CD8-positive, alpha-beta T cell (primary cell): ENCODE measurements at regions of chr15 and their contacts with region 1.

Region 1: GRCh38 chr15:38563723-38564519 is 693 bp downstream of the RASGRP1 start:
- DNase-seq: peak; percentile 79 to 94 (median 89)
- ATAC-seq: peak; percentile 61
- H3K4me3 ChIP-seq: peak overlapping the region; percentile 90 to 96
- H3K4me3 Mint-ChIP-seq: peak overlapping the region; percentile 98
- H3K27ac ChIP-seq: peak overlapping the region; percentile 78 to 79
- H3K27ac Mint-ChIP-seq: peak overlapping the region; percentile 95
- H3K4me1 ChIP-seq: peaks cover 56% of the 10 kb centered on the region
- H3K4me1 Mint-ChIP-seq: peaks cover 66% of the 10 kb centered on the region
- H3K27me3 ChIP-seq: no peaks in the 10 kb centered on the region
- H3K27me3 Mint-ChIP-seq: no peaks in the 10 kb centered on the region
- CTCF ChIP-seq: peak; percentile 98

Region 2: GRCh38 chr15:38474155-38474757 is 89.7 kb before region 1 on chr15:
- CTCF ChIA-PET with region 1: interaction called, 10 read pairs
- POLR2A ChIA-PET with region 1: no interaction called
- intact Hi-C with region 1: loop called (anchors 2 to 5 kb)
- DNase-seq: peak in 7 of 9 experiments; percentile 13 to 85 (median 32)
- ATAC-seq: peak; percentile 99
- H3K4me3 ChIP-seq: no peak overlapping the region
- H3K4me3 Mint-ChIP-seq: no peak overlapping the region
- H3K27ac ChIP-seq: peak overlapping the region in 1 of 2 experiments; percentile 17
- H3K27ac Mint-ChIP-seq: peak overlapping the region; percentile 37
- H3K4me1 ChIP-seq: no peaks in the 10 kb centered on the region
- H3K4me1 Mint-ChIP-seq: peaks cover 9% of the 10 kb centered on the region
- H3K27me3 ChIP-seq: no peaks in the 10 kb centered on the region
- H3K27me3 Mint-ChIP-seq: no peaks in the 10 kb centered on the region
- CTCF ChIP-seq: peak; percentile 74

Region 3: GRCh38 chr15:38521316-38521715 is 42.6 kb before region 1 on chr15:
- CTCF ChIA-PET with region 1: interaction called, 17 read pairs
- POLR2A ChIA-PET with region 1: no interaction called
- intact Hi-C with region 1: loop called in 1 of 2 experiments (anchors 5 kb)
- DNase-seq: no peak
- ATAC-seq: no peak
- H3K4me3 ChIP-seq: no peak overlapping the region
- H3K4me3 Mint-ChIP-seq: no peak overlapping the region
- H3K27ac ChIP-seq: no peak overlapping the region
- H3K27ac Mint-ChIP-seq: peak overlapping the region; percentile 83
- H3K4me1 ChIP-seq: peaks cover 5% of the 10 kb centered on the region
- H3K4me1 Mint-ChIP-seq: peaks cover 56% of the 10 kb centered on the region
- H3K27me3 ChIP-seq: no peaks in the 10 kb centered on the region
- H3K27me3 Mint-ChIP-seq: no peaks in the 10 kb centered on the region
- CTCF ChIP-seq: no peak

Region 4: GRCh38 chr15:38576837-38577236 is 12.9 kb after region 1 on chr15:
- CTCF ChIA-PET with region 1: interaction called, 13 read pairs
- POLR2A ChIA-PET with region 1: interaction called, 4 read pairs
- intact Hi-C with region 1: loop called in 1 of 2 experiments (anchors 2 kb)
- DNase-seq: peak in 2 of 9 experiments; percentile 62 to 82
- ATAC-seq: peak; percentile 72
- H3K4me3 ChIP-seq: no peak overlapping the region
- H3K4me3 Mint-ChIP-seq: peak overlapping the region; percentile 42
- H3K27ac ChIP-seq: peak overlapping the region; percentile 34 to 76
- H3K27ac Mint-ChIP-seq: peak overlapping the region; percentile 84
- H3K4me1 ChIP-seq: peaks cover 35% of the 10 kb centered on the region
- H3K4me1 Mint-ChIP-seq: peaks cover 39% of the 10 kb centered on the region
- H3K27me3 ChIP-seq: no peaks in the 10 kb centered on the region
- H3K27me3 Mint-ChIP-seq: no peaks in the 10 kb centered on the region
- CTCF ChIP-seq: no peak

Region 5: DNA sequence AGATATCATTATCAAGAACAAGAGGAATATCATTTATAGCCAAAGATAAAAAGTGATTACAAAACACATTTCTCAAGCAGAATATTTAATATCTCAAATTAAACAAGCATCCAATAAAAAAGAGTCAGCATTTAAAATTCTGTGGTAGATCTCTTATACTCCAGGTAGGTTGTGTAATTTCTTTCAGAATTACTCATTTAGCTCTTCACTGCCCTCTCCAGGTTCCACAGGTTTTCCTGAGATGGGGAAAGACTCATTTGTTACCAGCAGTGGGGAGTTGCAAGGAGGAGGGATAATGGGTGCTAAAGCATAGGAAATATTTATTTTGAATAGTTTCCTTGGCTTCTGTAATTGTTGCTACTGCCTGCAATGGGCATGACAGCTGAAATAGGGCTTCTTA is 83.8 kb after region 1 on chr15:
- CTCF ChIA-PET with region 1: interaction called, 396 read pairs
- POLR2A ChIA-PET with region 1: interaction called, 73 read pairs
- intact Hi-C with region 1: no loop called
- DNase-seq: no peak
- ATAC-seq: no peak
- H3K4me3 ChIP-seq: no peak overlapping the region
- H3K4me3 Mint-ChIP-seq: peak overlapping the region; percentile 53
- H3K27ac ChIP-seq: no peak overlapping the region
- H3K27ac Mint-ChIP-seq: peak overlapping the region; percentile 96
- H3K4me1 ChIP-seq: peaks cover 79% of the 10 kb centered on the region
- H3K4me1 Mint-ChIP-seq: peaks cover 85% of the 10 kb centered on the region
- H3K27me3 ChIP-seq: no peaks in the 10 kb centered on the region
- H3K27me3 Mint-ChIP-seq: no peaks in the 10 kb centered on the region
- CTCF ChIP-seq: no peak

Region 6: GRCh38 chr15:38683382-38684242 is 119.7 kb after region 1 on chr15:
- CTCF ChIA-PET with region 1: interaction called, 420 read pairs
- POLR2A ChIA-PET with region 1: interaction called, 97 read pairs
- intact Hi-C with region 1: loop called (anchors 1 kb)
- DNase-seq: peak; percentile 37 to 88 (median 74)
- ATAC-seq: peak; percentile 62
- H3K4me3 ChIP-seq: no peak overlapping the region
- H3K4me3 Mint-ChIP-seq: peak overlapping the region; percentile 3
- H3K27ac ChIP-seq: peak overlapping the region in 1 of 2 experiments; percentile 15
- H3K27ac Mint-ChIP-seq: peak overlapping the region; percentile 91
- H3K4me1 ChIP-seq: peaks cover 60% of the 10 kb centered on the region
- H3K4me1 Mint-ChIP-seq: peaks cover 76% of the 10 kb centered on the region
- H3K27me3 ChIP-seq: no peaks in the 10 kb centered on the region
- H3K27me3 Mint-ChIP-seq: no peaks in the 10 kb centered on the region
- CTCF ChIP-seq: peak; percentile 93

Region 7: GRCh38 chr15:39040861-39041260 is 476.9 kb after region 1 on chr15:
- CTCF ChIA-PET with region 1: no interaction called
- POLR2A ChIA-PET with region 1: no interaction called
- intact Hi-C with region 1: no loop called
- DNase-seq: no peak
- ATAC-seq: no peak
- H3K4me3 ChIP-seq: no peak overlapping the region
- H3K4me3 Mint-ChIP-seq: no peak overlapping the region
- H3K27ac ChIP-seq: no peak overlapping the region
- H3K27ac Mint-ChIP-seq: no peak overlapping the region
- H3K4me1 ChIP-seq: no peaks in the 10 kb centered on the region
- H3K4me1 Mint-ChIP-seq: no peaks in the 10 kb centered on the region
- H3K27me3 ChIP-seq: no peaks in the 10 kb centered on the region
- H3K27me3 Mint-ChIP-seq: peaks cover 31% of the 10 kb centered on the region
- CTCF ChIP-seq: no peak